CD4-positive, alpha-beta memory T cell (primary cell): ENCODE measurements at regions of chr19 and their contacts with region 1.

Region 1: GRCh38 chr19:14031719-14032480 is at the start of gene IL27RA:
- DNase-seq: peak; percentile 84 to 88 (median 87)
- H3K4me3 ChIP-seq: peak within 1 kb of the TSS; percentile 70 to 97
- H3K4me3 Mint-ChIP-seq: peak within 1 kb of the TSS; percentile 89 to 97 (median 94)
- H3K27ac ChIP-seq: peak within 1 kb of the TSS; percentile 96
- H3K27ac Mint-ChIP-seq: peak within 1 kb of the TSS; percentile 93 to 99 (median 98)
- H3K4me1 ChIP-seq: peaks cover 30% of the 10 kb centered on the region
- H3K4me1 Mint-ChIP-seq: peaks cover 23 to 56% (median 37%) of the 10 kb centered on the region in 4 donors
- H3K27me3 ChIP-seq: no peaks in the 10 kb centered on the region
- H3K27me3 Mint-ChIP-seq: no peaks in the 10 kb centered on the region
- total RNA-seq, gene IL27RA: 74.3 to 76.2 TPM

Region 2: DNA sequence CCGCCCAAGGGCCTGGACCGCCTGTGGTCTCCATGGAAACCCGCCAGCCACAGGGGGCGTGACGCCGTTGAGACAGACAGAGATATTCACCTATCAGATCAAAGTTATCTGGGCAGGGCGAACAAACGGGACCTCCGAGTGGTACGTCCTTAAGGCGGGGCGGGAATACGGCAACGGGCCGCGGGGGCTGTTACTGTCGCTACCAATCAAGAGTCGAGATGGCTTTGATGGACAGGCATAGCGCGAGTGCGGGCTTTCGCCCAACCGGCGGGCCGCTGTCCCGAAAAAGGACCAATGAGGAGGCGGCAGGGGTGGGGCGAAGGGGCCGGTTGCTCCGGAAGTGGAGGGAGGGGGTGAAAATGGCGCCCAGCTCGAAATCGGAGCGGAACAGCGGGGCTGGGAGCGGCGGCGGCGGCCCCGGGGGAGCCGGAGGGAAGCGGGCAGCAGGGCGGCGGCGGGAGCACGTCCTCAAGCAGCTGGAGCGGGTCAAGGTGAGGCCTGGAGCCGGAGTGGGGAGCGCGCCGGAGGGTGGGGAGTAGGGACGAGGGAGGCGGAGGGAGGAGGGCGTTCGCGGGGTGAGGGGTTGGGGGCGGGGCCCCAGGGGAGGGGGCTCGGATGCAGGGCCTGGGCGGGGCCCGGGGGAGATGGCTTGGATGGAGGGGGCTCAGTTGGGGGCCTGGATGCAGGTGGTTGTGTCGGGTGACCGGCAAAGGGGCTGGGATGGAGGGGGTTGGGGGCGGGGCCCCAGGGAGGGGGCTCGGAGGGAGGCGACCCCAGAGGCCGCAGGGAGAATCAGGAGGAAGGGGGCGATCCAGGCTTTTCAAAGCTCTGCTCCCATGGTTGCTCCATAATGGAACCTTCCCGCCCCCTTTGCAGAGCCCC is 79.5 kb before region 1 on chr19 and contains the start of gene DCAF15:
- CTCF ChIA-PET with region 1: interaction called, 10 read pairs
- POLR2A ChIA-PET with region 1: interaction called, 61 read pairs
- intact Hi-C with region 1: no loop called
- DNase-seq: peak; percentile 98 to 100 (median 99)
- H3K4me3 ChIP-seq: peak within 1 kb of the TSS; percentile 43 to 71
- H3K4me3 Mint-ChIP-seq: peak within 1 kb of the TSS; percentile 88 to 96 (median 92)
- H3K27ac ChIP-seq: peak within 1 kb of the TSS; percentile 80
- H3K27ac Mint-ChIP-seq: peak within 1 kb of the TSS; percentile 86 to 99 (median 96)
- H3K4me1 ChIP-seq: peaks cover 22% of the 10 kb centered on the region
- H3K4me1 Mint-ChIP-seq: peaks cover 12 to 28% (median 17%) of the 10 kb centered on the region in 4 donors
- H3K27me3 ChIP-seq: no peaks in the 10 kb centered on the region
- H3K27me3 Mint-ChIP-seq: no peaks in the 10 kb centered on the region
- total RNA-seq, gene DCAF15: 92.9 to 96.7 TPM

Region 3: DNA sequence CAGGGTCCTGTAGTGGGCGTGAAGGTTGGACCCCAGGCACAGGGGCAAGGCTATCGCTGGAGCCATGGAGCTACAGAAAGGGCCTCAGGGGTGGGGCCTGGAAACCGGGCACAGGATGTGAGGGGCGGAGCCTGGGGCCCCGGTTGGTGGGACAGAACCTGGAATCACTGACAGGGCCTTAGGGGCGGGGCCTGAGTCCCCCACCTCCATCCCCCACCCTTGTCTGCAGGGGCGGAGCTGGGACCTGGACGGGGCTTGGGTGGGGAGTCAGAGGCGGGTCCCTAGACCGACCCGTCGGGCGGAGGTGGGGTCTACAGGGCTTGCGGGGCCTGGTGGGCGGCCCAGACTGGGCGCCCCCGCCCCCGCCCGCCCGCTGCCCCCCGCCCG is 53.6 kb before region 1 on chr19:
- CTCF ChIA-PET with region 1: interaction called, 3 read pairs
- POLR2A ChIA-PET with region 1: interaction called, 117 read pairs
- intact Hi-C with region 1: no loop called
- DNase-seq: no peak
- H3K4me3 ChIP-seq: no peak overlapping the region
- H3K4me3 Mint-ChIP-seq: peak overlapping the region in 1 of 8 donors; percentile 50
- H3K27ac ChIP-seq: no peak overlapping the region
- H3K27ac Mint-ChIP-seq: no peak overlapping the region
- H3K4me1 ChIP-seq: peaks cover 26% of the 10 kb centered on the region
- H3K4me1 Mint-ChIP-seq: peaks cover 11 to 50% (median 24%) of the 10 kb centered on the region in 4 donors
- H3K27me3 ChIP-seq: no peaks in the 10 kb centered on the region
- H3K27me3 Mint-ChIP-seq: no peaks in the 10 kb centered on the region

Region 4: GRCh38 chr19:14000686-14001623 is 30.9 kb before region 1 on chr19:
- CTCF ChIA-PET with region 1: interaction called, 5 read pairs
- POLR2A ChIA-PET with region 1: interaction called, 225 read pairs
- intact Hi-C with region 1: loop called (anchors 1 kb)
- DNase-seq: no peak
- H3K4me3 ChIP-seq: no peak overlapping the region
- H3K4me3 Mint-ChIP-seq: peak overlapping the region in 6 of 8 donors; percentile 4 to 69 (median 51)
- H3K27ac ChIP-seq: peak overlapping the region; percentile 47
- H3K27ac Mint-ChIP-seq: peak overlapping the region; percentile 82 to 98 (median 96)
- H3K4me1 ChIP-seq: peaks cover 58% of the 10 kb centered on the region
- H3K4me1 Mint-ChIP-seq: peaks cover 34 to 64% (median 45%) of the 10 kb centered on the region in 4 donors
- H3K27me3 ChIP-seq: no peaks in the 10 kb centered on the region
- H3K27me3 Mint-ChIP-seq: no peaks in the 10 kb centered on the region

Region 5: DNA sequence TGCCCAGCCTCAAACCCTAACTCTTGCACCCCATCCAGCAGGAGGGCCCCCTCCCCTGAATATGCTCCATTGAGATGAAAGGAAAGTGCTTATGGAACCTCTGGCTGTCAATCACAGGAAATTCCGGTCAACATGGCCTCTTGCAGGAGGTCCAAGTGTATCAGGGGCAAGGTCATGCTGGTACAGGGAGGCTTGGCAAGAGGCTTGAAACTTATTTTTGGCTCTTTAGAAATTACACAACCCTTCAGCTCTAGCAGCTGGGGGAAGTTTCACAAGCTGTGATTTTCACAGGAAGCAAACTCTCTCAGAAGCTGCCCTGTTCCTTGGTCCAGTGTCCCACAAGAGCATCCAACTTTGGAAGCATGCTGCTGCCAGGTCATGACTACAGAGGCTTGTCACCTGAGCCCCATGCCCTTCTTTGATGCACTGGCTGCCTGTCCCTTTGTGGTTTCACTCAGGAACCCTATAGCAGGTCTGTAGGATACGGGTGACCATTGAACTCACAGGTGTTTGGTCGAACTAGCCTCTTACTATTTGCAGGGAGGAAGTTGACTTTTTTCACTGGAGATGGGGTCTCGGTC is 96.1 kb after region 1 on chr19:
- CTCF ChIA-PET with region 1: no interaction called
- POLR2A ChIA-PET with region 1: no interaction called
- intact Hi-C with region 1: no loop called
- DNase-seq: no peak
- H3K4me3 ChIP-seq: no peak overlapping the region
- H3K4me3 Mint-ChIP-seq: no peak overlapping the region
- H3K27ac ChIP-seq: no peak overlapping the region
- H3K27ac Mint-ChIP-seq: no peak overlapping the region
- H3K4me1 ChIP-seq: no peaks in the 10 kb centered on the region
- H3K4me1 Mint-ChIP-seq: no peaks in the 10 kb centered on the region
- H3K27me3 ChIP-seq: no peaks in the 10 kb centered on the region
- H3K27me3 Mint-ChIP-seq: no peaks in the 10 kb centered on the region

Region 6: GRCh38 chr19:14237014-14237941 is 205.4 kb after region 1 on chr19:
- CTCF ChIA-PET with region 1: no interaction called
- POLR2A ChIA-PET with region 1: no interaction called
- intact Hi-C with region 1: no loop called
- DNase-seq: peak in 3 of 5 donors; percentile 37 to 49 (median 38)
- H3K4me3 ChIP-seq: no peak overlapping the region
- H3K4me3 Mint-ChIP-seq: peak overlapping the region in 4 of 8 donors; percentile 22 to 57 (median 39)
- H3K27ac ChIP-seq: no peak overlapping the region
- H3K27ac Mint-ChIP-seq: peak overlapping the region in 2 of 7 donors; percentile 24 to 36
- H3K4me1 ChIP-seq: peaks cover 7% of the 10 kb centered on the region
- H3K4me1 Mint-ChIP-seq: peaks cover 8 to 19% (median 9%) of the 10 kb centered on the region in 4 donors
- H3K27me3 ChIP-seq: no peaks in the 10 kb centered on the region
- H3K27me3 Mint-ChIP-seq: no peaks in the 10 kb centered on the region

Region 7: DNA sequence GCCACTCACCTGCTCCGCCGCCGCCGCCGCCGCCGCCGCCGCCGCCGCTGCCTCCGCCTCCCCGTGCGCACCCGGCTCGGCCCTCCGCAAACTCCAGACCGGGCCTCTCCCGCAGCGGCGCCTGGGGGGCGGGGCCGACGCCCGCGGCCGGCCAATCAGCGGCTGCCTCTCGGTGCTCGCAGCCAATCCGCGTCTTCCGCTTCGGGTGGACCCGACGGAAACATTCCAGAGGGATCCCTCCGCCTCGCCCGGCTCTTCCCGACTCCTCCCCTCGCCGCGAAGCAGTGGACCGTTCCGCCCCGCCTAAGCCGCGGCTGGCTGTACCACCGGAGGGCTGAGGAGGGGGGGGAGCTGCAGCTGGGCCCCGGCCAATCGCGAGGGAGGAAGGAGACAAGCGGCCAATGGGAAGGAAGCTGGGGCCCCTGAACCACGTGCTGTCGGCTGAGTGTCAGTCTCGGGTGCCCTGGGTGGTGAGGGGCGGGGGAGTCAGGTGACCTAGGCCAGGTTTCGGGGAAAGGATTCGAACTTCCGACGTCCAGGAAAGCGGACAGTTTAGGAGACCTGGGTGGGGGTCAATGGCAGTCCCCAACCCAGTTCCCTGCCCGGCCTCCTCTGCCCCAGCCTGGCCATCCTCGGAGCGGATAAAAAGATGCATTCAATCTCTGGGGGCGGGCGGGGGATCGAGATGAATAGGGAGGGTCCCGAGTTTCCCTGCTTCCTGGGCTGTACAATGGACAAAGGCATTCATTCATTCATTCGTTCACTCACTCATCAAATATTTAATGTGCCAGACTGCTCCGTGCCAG is 464.3 kb after region 1 on chr19 and contains the start of gene GIPC1:
- CTCF ChIA-PET with region 1: no interaction called
- POLR2A ChIA-PET with region 1: no interaction called
- intact Hi-C with region 1: no loop called
- DNase-seq: peak; percentile 83 to 90 (median 85)
- H3K4me3 ChIP-seq: peak within 1 kb of the TSS; percentile 42 to 56
- H3K4me3 Mint-ChIP-seq: peak within 1 kb of the TSS; percentile 84 to 92 (median 88)
- H3K27ac ChIP-seq: peak within 1 kb of the TSS; percentile 63
- H3K27ac Mint-ChIP-seq: peak within 1 kb of the TSS; percentile 84 to 96 (median 90)
- H3K4me1 ChIP-seq: peaks cover 27% of the 10 kb centered on the region
- H3K4me1 Mint-ChIP-seq: peaks cover 23 to 40% (median 29%) of the 10 kb centered on the region in 4 donors
- H3K27me3 ChIP-seq: no peaks in the 10 kb centered on the region
- H3K27me3 Mint-ChIP-seq: no peaks in the 10 kb centered on the region
- total RNA-seq, gene GIPC1: 32.3 to 33.8 TPM